Mammary epithelial cell (primary cell): ENCODE measurements at regions of chr22 and their contacts with region 1.

Region 1: GRCh38 chr22:38872172-38872830 is at the start of gene CBX6:
- DNase-seq: peak; percentile 81
- H3K4me3 ChIP-seq: peak within 1 kb of the TSS; percentile 68 to 83 (median 76)
- H3K27ac ChIP-seq: peak within 1 kb of the TSS; percentile 36
- H3K4me1 ChIP-seq: peaks cover 27% of the 10 kb centered on the region
- H3K27me3 ChIP-seq: no peaks in the 10 kb centered on the region
- CTCF ChIP-seq: no peak
- total RNA-seq, gene CBX6: 32.3 to 55.7 TPM

Region 2: GRCh38 chr22:38923463-38924346 is 51.4 kb after region 1 on chr22:
- CTCF ChIA-PET with region 1: no interaction called
- dilution Hi-C with region 1: no loop called
- in situ Hi-C with region 1: no loop called
- intact Hi-C with region 1: loop called (anchors 5 kb)
- DNase-seq: peak; percentile 83
- H3K4me3 ChIP-seq: peak overlapping the region; percentile 0 to 30 (median 22)
- H3K27ac ChIP-seq: peak overlapping the region; percentile 41
- H3K4me1 ChIP-seq: peaks cover 23% of the 10 kb centered on the region
- H3K27me3 ChIP-seq: no peaks in the 10 kb centered on the region
- CTCF ChIP-seq: peak; percentile 18 to 34

Region 3: DNA sequence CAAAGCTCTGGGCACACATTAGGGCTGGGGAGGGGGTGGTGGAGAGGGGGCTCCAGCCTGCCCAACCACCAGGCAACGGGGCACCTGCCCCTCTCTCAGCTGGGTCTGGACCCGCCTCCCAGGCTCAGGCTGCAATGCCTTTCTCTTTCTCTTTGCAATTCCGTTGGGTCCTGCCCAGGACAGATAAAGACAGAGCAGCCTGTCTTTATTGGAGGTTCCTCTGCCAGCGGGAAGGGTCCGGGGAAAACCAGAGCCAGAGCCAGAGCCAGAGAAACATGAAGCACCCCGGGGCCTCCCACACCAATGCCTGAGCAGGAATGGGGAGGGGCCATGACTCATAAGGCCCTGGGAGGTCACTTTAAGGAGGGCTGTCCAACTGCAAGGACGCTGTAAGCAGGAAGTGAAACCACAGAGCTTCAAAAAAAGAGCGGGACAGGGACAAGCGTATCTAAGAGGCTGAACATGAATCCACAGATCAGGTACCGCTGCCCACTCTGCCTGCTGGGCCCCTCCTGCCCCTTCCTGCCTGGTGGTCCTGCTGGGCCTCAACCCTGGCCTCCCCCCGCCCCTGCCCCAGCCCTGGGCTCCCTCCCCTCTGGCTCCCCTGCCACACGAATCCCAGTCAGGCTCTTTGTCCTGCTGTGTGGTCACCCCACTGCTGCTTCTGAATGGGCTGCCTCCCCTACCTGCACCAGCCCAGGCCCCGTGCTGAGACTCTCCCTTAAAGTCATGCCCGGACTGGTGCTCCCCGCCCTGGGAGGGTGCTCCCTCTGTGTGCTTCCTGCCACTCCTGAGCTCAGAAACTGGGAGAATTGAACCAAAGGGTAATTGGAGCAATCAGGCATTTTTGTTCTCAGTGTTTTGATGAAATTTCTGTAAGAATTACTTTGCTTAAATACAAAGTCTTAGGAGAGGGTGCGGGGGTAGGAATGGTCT is 110.0 kb after region 1 on chr22 and contains the start of gene APOBEC3B:
- CTCF ChIA-PET with region 1: interaction called, 5 read pairs
- dilution Hi-C with region 1: no loop called
- in situ Hi-C with region 1: no loop called
- intact Hi-C with region 1: loop called (anchors 2 kb)
- DNase-seq: peak; percentile 93
- H3K4me3 ChIP-seq: peak within 1 kb of the TSS; percentile 11 to 41 (median 32)
- H3K27ac ChIP-seq: peak within 1 kb of the TSS; percentile 82
- H3K4me1 ChIP-seq: peaks cover 39% of the 10 kb centered on the region
- H3K27me3 ChIP-seq: no peaks in the 10 kb centered on the region
- CTCF ChIP-seq: no peak
- total RNA-seq, gene APOBEC3B: 0.83 to 21.2 TPM

Region 4: GRCh38 chr22:39117585-39118191 is 245.4 kb after region 1 on chr22:
- CTCF ChIA-PET with region 1: interaction called, 3 read pairs
- dilution Hi-C with region 1: no loop called
- in situ Hi-C with region 1: loop called (anchors 10 kb)
- intact Hi-C with region 1: loop called (anchors 1 kb)
- DNase-seq: peak; percentile 42
- H3K4me3 ChIP-seq: no peak overlapping the region
- H3K27ac ChIP-seq: no peak overlapping the region
- H3K4me1 ChIP-seq: peaks cover 10% of the 10 kb centered on the region
- H3K27me3 ChIP-seq: no peaks in the 10 kb centered on the region
- CTCF ChIP-seq: peak; percentile 52 to 67

Region 5: DNA sequence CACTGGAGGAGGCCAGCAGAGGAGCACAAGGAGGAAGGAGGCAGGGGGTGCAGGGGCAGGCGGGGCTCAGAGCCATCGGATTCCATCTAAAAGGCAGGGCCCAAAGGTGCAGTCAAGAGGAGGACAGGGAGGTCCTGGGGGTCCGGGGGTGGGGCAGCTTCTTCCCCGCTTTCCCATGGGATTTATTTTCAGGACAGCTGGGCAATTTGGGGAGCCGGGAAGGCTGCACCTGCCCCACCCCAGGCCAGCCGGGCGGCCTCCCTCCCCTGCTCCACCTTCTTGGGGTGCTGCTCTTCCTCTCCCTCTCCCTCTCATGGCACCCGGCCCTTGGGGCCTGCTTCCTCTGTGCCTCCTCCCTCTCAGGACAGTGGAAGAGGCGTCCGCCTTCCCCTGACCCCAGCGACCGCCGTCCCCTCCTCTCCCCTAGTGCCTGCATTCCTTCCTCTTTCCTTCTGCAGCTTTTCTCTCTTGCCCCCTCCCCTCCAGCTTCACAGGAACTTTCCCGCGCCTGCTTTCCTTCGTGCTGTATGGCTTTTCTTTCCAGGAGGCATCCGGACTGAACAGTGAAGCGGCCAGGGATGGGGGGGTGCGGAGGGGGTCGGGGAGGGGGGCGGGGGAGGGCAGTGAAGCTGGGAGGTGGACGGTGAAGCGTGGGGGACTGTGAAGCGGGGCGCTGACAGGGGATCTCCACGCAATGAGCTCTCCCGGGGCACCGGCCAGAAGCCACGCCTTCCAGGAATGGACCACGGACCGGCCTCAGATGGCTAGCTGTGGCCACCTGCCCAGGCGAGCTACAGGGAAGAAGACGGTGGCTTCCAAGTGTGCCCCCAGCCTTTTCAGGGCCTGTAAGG is 251.7 kb after region 1 on chr22:
- CTCF ChIA-PET with region 1: interaction called, 3 read pairs
- dilution Hi-C with region 1: no loop called
- in situ Hi-C with region 1: loop called (anchors 10 kb)
- intact Hi-C with region 1: loop called (anchors 1 kb)
- DNase-seq: no peak
- H3K4me3 ChIP-seq: no peak overlapping the region
- H3K27ac ChIP-seq: no peak overlapping the region
- H3K4me1 ChIP-seq: no peaks in the 10 kb centered on the region
- H3K27me3 ChIP-seq: no peaks in the 10 kb centered on the region
- CTCF ChIP-seq: no peak